CD8-positive, alpha-beta T cell (primary cell): ENCODE measurements at regions of chr2 and their contacts with region 1.

Region 1: DNA sequence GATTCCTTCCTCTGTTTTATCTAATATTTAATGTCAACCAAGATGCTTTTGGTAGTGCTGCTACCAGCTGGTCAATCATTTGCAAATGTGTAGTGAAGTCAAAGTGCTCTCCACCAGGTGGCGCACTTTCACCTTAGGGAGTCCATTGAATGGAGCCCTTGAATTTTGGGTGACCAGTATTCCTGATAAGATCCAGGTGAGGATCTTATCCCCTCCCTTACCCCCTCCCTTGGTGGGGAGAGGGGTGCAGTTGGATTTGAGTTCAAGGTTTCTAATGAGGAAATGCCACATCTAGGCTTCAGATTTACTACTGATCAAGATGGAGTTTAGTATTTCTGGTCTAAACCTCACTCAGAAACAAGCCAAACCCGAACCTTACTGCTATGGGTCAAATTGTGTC is 12.0 kb upstream of the E2F6 start:
- DNase-seq: peak; percentile 56 to 87 (median 80)
- ATAC-seq: peak; percentile 59
- H3K4me3 ChIP-seq: no peak overlapping the region
- H3K4me3 Mint-ChIP-seq: no peak overlapping the region
- H3K27ac ChIP-seq: no peak overlapping the region
- H3K27ac Mint-ChIP-seq: no peak overlapping the region
- H3K4me1 ChIP-seq: no peaks in the 10 kb centered on the region
- H3K4me1 Mint-ChIP-seq: peaks cover 2% of the 10 kb centered on the region
- H3K27me3 ChIP-seq: peaks cover 5 to 14% of the 10 kb centered on the region in 2 experiments
- H3K27me3 Mint-ChIP-seq: peaks cover 24% of the 10 kb centered on the region
- CTCF ChIP-seq: peak; percentile 89

Region 2: GRCh38 chr2:11457935-11458334 is 20.1 kb before region 1 on chr2:
- CTCF ChIA-PET with region 1: interaction called, 31 read pairs
- POLR2A ChIA-PET with region 1: interaction called, 4 read pairs
- intact Hi-C with region 1: no loop called
- DNase-seq: no peak
- ATAC-seq: no peak
- H3K4me3 ChIP-seq: no peak overlapping the region
- H3K4me3 Mint-ChIP-seq: no peak overlapping the region
- H3K27ac ChIP-seq: no peak overlapping the region
- H3K27ac Mint-ChIP-seq: no peak overlapping the region
- H3K4me1 ChIP-seq: peaks cover 12% of the 10 kb centered on the region
- H3K4me1 Mint-ChIP-seq: peaks cover 47% of the 10 kb centered on the region
- H3K27me3 ChIP-seq: no peaks in the 10 kb centered on the region
- H3K27me3 Mint-ChIP-seq: no peaks in the 10 kb centered on the region
- CTCF ChIP-seq: no peak

Region 3: DNA sequence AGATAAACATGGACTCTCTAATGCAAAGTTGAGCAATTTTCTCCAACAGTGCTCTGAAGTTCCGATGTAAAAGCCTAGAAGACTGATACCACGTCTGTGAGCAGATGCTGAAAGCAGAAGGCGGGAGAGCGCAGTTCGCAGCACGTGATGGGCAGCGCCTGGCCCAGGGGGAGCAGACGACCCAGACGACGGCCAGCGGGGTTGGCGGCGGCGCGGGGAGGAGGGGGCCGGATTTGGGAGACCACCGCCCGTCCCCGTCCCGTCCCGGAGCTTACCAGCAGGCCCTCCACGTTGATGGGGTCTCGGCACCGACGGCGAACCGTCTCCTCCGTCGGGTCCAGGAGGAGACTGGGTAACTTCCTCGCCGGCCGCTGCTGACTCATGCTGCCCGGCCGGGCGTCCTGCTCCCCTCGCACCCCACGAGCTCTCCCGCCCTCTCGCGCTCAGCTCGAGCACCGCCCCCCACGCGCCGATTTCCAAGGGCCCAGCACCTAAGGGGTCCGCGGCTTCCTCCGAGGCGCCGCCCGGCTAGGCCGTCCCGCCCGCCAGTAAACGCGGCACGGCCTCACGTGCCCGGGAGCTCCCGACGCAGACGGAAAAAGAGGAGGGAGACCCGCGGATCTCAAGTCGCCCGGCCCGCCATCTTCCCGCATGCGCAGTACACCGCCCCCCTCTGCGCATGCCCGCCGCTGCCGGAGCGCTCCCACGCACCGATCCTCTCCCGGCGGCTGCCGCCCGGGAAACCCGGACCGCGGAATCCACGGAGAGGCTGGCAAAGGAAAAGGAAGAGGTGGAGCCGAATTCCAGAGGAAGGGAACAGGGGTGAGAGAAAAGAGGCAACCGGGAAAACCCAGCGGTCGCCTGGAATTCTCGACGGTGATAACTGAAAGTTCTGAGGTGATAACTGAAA is 12.2 kb before region 1 on chr2 and contains the start of gene E2F6:
- CTCF ChIA-PET with region 1: interaction called, 31 read pairs
- POLR2A ChIA-PET with region 1: no interaction called
- intact Hi-C with region 1: no loop called
- DNase-seq: peak; percentile 68 to 91 (median 81)
- ATAC-seq: peak; percentile 85
- H3K4me3 ChIP-seq: peak within 1 kb of the TSS; percentile 83 to 87
- H3K4me3 Mint-ChIP-seq: peak within 1 kb of the TSS; percentile 96
- H3K27ac ChIP-seq: peak within 1 kb of the TSS; percentile 51 to 70
- H3K27ac Mint-ChIP-seq: peak within 1 kb of the TSS; percentile 91
- H3K4me1 ChIP-seq: peaks cover 13% of the 10 kb centered on the region
- H3K4me1 Mint-ChIP-seq: peaks cover 37% of the 10 kb centered on the region
- H3K27me3 ChIP-seq: no peaks in the 10 kb centered on the region
- H3K27me3 Mint-ChIP-seq: no peaks in the 10 kb centered on the region
- CTCF ChIP-seq: no peak
- total RNA-seq, gene E2F6: 4.9 to 5.0 TPM

Region 4: GRCh38 chr2:11583840-11584524 is 106.0 kb after region 1 on chr2:
- CTCF ChIA-PET with region 1: interaction called, 4 read pairs
- POLR2A ChIA-PET with region 1: no interaction called
- intact Hi-C with region 1: loop called (anchors 1 to 2 kb)
- DNase-seq: peak; percentile 16 to 65 (median 53)
- ATAC-seq: peak; percentile 94
- H3K4me3 ChIP-seq: no peak overlapping the region
- H3K4me3 Mint-ChIP-seq: no peak overlapping the region
- H3K27ac ChIP-seq: no peak overlapping the region
- H3K27ac Mint-ChIP-seq: no peak overlapping the region
- H3K4me1 ChIP-seq: no peaks in the 10 kb centered on the region
- H3K4me1 Mint-ChIP-seq: peaks cover 3% of the 10 kb centered on the region
- H3K27me3 ChIP-seq: no peaks in the 10 kb centered on the region
- H3K27me3 Mint-ChIP-seq: peaks cover 11% of the 10 kb centered on the region
- CTCF ChIP-seq: peak; percentile 53

Region 5: GRCh38 chr2:11688222-11689069 is 210.5 kb after region 1 on chr2:
- CTCF ChIA-PET with region 1: interaction called, 3 read pairs
- POLR2A ChIA-PET with region 1: no interaction called
- intact Hi-C with region 1: loop called (anchors 5 kb)
- DNase-seq: peak; percentile 62 to 86 (median 81)
- ATAC-seq: peak; percentile 85
- H3K4me3 ChIP-seq: no peak overlapping the region
- H3K4me3 Mint-ChIP-seq: peak overlapping the region; percentile 58
- H3K27ac ChIP-seq: no peak overlapping the region
- H3K27ac Mint-ChIP-seq: no peak overlapping the region
- H3K4me1 ChIP-seq: peaks cover 4% of the 10 kb centered on the region
- H3K4me1 Mint-ChIP-seq: peaks cover 11% of the 10 kb centered on the region
- H3K27me3 ChIP-seq: peaks cover 0 to 4% of the 10 kb centered on the region in 2 experiments
- H3K27me3 Mint-ChIP-seq: peaks cover 8% of the 10 kb centered on the region
- CTCF ChIP-seq: peak; percentile 96

Region 6: DNA sequence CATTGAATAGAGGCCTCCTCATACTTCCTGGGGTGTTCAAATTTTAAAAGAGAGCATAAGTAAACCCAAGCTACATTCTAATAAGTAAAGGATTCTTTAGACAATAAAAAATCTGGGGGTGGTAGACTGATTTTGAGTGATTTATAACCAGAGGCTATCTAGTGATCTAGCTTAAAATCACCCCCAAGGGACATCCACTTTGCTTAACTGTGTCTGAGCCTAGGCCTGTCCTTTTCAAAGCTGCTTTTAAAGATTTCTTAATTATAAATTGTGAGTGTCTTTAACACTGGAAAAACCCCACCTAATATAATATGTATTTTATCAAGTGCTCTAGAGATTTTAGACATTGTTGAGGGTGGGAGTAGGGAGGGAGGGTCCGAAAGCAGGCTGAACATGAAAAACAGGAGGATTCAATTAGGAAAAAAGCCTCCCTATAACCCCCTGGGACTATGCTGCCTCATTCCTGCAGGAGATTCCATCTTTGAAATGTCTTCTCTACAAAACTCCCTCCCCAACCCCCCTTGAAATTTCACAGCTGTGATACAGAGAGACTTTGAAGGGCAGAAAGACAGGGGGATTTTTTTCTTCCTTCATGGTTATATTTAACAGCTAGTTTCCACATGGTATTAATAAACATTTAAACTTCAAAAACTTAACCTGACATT is 1296.2 kb after region 1 on chr2:
- CTCF ChIA-PET with region 1: no interaction called
- POLR2A ChIA-PET with region 1: no interaction called
- intact Hi-C with region 1: no loop called
- DNase-seq: no peak
- ATAC-seq: no peak
- H3K4me3 ChIP-seq: no peak overlapping the region
- H3K4me3 Mint-ChIP-seq: no peak overlapping the region
- H3K27ac ChIP-seq: no peak overlapping the region
- H3K27ac Mint-ChIP-seq: no peak overlapping the region
- H3K4me1 ChIP-seq: no peaks in the 10 kb centered on the region
- H3K4me1 Mint-ChIP-seq: no peaks in the 10 kb centered on the region
- H3K27me3 ChIP-seq: peaks cover 0 to 2% of the 10 kb centered on the region in 2 experiments
- H3K27me3 Mint-ChIP-seq: peaks cover 21% of the 10 kb centered on the region
- CTCF ChIP-seq: no peak